CD8-positive, alpha-beta T cell (primary cell): ENCODE measurements at regions of chr17 and their contacts with region 1.

Region 1: GRCh38 chr17:61412143-61412859 is 12.7 kb downstream of the TBX2 start:
- DNase-seq: peak; percentile 62 to 89 (median 78)
- ATAC-seq: peak; percentile 78
- H3K4me3 ChIP-seq: peak overlapping the region; percentile 60 to 78
- H3K4me3 Mint-ChIP-seq: peak overlapping the region; percentile 77
- H3K27ac ChIP-seq: no peak overlapping the region
- H3K27ac Mint-ChIP-seq: no peak overlapping the region
- H3K4me1 ChIP-seq: peaks cover 39% of the 10 kb centered on the region
- H3K4me1 Mint-ChIP-seq: peaks cover 29% of the 10 kb centered on the region
- H3K27me3 ChIP-seq: peaks cover 26 to 46% of the 10 kb centered on the region in 2 experiments
- H3K27me3 Mint-ChIP-seq: peaks cover 30% of the 10 kb centered on the region
- CTCF ChIP-seq: peak; percentile 96

Region 2: DNA sequence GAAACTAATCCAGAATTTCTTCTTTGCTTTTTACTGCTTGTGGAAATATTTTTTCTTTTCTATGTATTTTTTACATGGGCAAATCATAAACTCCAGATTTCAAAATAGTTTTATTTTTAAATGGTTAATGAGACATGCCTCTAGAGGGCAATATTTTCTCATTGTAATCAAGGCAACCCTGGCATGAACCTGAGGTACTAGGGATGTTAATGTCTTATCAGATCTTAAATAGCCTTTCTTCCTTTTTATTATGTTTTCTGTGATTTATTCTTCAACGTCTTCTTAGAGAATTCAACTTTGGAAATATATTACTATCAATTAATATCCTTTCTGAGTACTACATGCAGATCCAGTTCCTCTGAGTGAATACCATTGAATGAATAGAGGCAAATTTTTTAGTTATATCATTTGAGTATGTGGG is 410.0 kb before region 1 on chr17:
- CTCF ChIA-PET with region 1: interaction called, 3 read pairs
- POLR2A ChIA-PET with region 1: no interaction called
- intact Hi-C with region 1: loop called in 1 of 2 experiments (anchors 5 kb)
- DNase-seq: peak in 2 of 9 experiments; percentile 19 to 47
- ATAC-seq: no peak
- H3K4me3 ChIP-seq: no peak overlapping the region
- H3K4me3 Mint-ChIP-seq: no peak overlapping the region
- H3K27ac ChIP-seq: no peak overlapping the region
- H3K27ac Mint-ChIP-seq: no peak overlapping the region
- H3K4me1 ChIP-seq: no peaks in the 10 kb centered on the region
- H3K4me1 Mint-ChIP-seq: no peaks in the 10 kb centered on the region
- H3K27me3 ChIP-seq: no peaks in the 10 kb centered on the region
- H3K27me3 Mint-ChIP-seq: no peaks in the 10 kb centered on the region
- CTCF ChIP-seq: peak; percentile 78

Region 3: GRCh38 chr17:61325382-61326073 is 86.8 kb before region 1 on chr17:
- CTCF ChIA-PET with region 1: no interaction called
- POLR2A ChIA-PET with region 1: no interaction called
- intact Hi-C with region 1: no loop called
- DNase-seq: no peak
- ATAC-seq: no peak
- H3K4me3 ChIP-seq: no peak overlapping the region
- H3K4me3 Mint-ChIP-seq: no peak overlapping the region
- H3K27ac ChIP-seq: no peak overlapping the region
- H3K27ac Mint-ChIP-seq: no peak overlapping the region
- H3K4me1 ChIP-seq: no peaks in the 10 kb centered on the region
- H3K4me1 Mint-ChIP-seq: no peaks in the 10 kb centered on the region
- H3K27me3 ChIP-seq: no peaks in the 10 kb centered on the region
- H3K27me3 Mint-ChIP-seq: no peaks in the 10 kb centered on the region
- CTCF ChIP-seq: no peak

Region 4: GRCh38 chr17:61427567-61427966 is 15.3 kb after region 1 on chr17:
- CTCF ChIA-PET with region 1: interaction called, 10 read pairs
- POLR2A ChIA-PET with region 1: no interaction called
- intact Hi-C with region 1: no loop called
- DNase-seq: no peak
- ATAC-seq: no peak
- H3K4me3 ChIP-seq: no peak overlapping the region
- H3K4me3 Mint-ChIP-seq: no peak overlapping the region
- H3K27ac ChIP-seq: no peak overlapping the region
- H3K27ac Mint-ChIP-seq: no peak overlapping the region
- H3K4me1 ChIP-seq: no peaks in the 10 kb centered on the region
- H3K4me1 Mint-ChIP-seq: no peaks in the 10 kb centered on the region
- H3K27me3 ChIP-seq: no peaks in the 10 kb centered on the region
- H3K27me3 Mint-ChIP-seq: peaks cover 27% of the 10 kb centered on the region
- CTCF ChIP-seq: no peak

Region 5: GRCh38 chr17:61551255-61551742 is 139.0 kb after region 1 on chr17:
- CTCF ChIA-PET with region 1: interaction called, 4 read pairs
- POLR2A ChIA-PET with region 1: no interaction called
- intact Hi-C with region 1: loop called in 1 of 2 experiments (anchors 1 kb)
- DNase-seq: peak in 2 of 9 experiments; percentile 10 to 28
- ATAC-seq: no peak
- H3K4me3 ChIP-seq: no peak overlapping the region
- H3K4me3 Mint-ChIP-seq: no peak overlapping the region
- H3K27ac ChIP-seq: no peak overlapping the region
- H3K27ac Mint-ChIP-seq: no peak overlapping the region
- H3K4me1 ChIP-seq: no peaks in the 10 kb centered on the region
- H3K4me1 Mint-ChIP-seq: no peaks in the 10 kb centered on the region
- H3K27me3 ChIP-seq: peaks cover 0 to 8% of the 10 kb centered on the region in 2 experiments
- H3K27me3 Mint-ChIP-seq: peaks cover 47% of the 10 kb centered on the region
- CTCF ChIP-seq: peak; percentile 40

Region 6: GRCh38 chr17:61837175-61838051 is 425.1 kb after region 1 on chr17:
- CTCF ChIA-PET with region 1: interaction called, 4 read pairs
- POLR2A ChIA-PET with region 1: no interaction called
- intact Hi-C with region 1: loop called (anchors 1 kb)
- DNase-seq: peak; percentile 11 to 69 (median 45)
- ATAC-seq: peak; percentile 48
- H3K4me3 ChIP-seq: no peak overlapping the region
- H3K4me3 Mint-ChIP-seq: no peak overlapping the region
- H3K27ac ChIP-seq: no peak overlapping the region
- H3K27ac Mint-ChIP-seq: no peak overlapping the region
- H3K4me1 ChIP-seq: no peaks in the 10 kb centered on the region
- H3K4me1 Mint-ChIP-seq: no peaks in the 10 kb centered on the region
- H3K27me3 ChIP-seq: no peaks in the 10 kb centered on the region
- H3K27me3 Mint-ChIP-seq: no peaks in the 10 kb centered on the region
- CTCF ChIP-seq: peak; percentile 77

Region 7: GRCh38 chr17:61927200-61928165 is 515.2 kb after region 1 on chr17 and contains the start of gene INTS2:
- CTCF ChIA-PET with region 1: no interaction called
- POLR2A ChIA-PET with region 1: no interaction called
- intact Hi-C with region 1: loop called in 1 of 2 experiments (anchors 2 kb)
- DNase-seq: peak; percentile 92 to 98 (median 96)
- ATAC-seq: peak; percentile 84
- H3K4me3 ChIP-seq: peak within 1 kb of the TSS; percentile 80 to 91
- H3K4me3 Mint-ChIP-seq: peak within 1 kb of the TSS; percentile 90
- H3K27ac ChIP-seq: peak within 1 kb of the TSS; percentile 71 to 92
- H3K27ac Mint-ChIP-seq: peak within 1 kb of the TSS; percentile 98
- H3K4me1 ChIP-seq: peaks cover 14% of the 10 kb centered on the region
- H3K4me1 Mint-ChIP-seq: peaks cover 22% of the 10 kb centered on the region
- H3K27me3 ChIP-seq: no peaks in the 10 kb centered on the region
- H3K27me3 Mint-ChIP-seq: peaks cover 2% of the 10 kb centered on the region
- CTCF ChIP-seq: no peak
- total RNA-seq, gene INTS2: 9.4 to 9.6 TPM